Sigmoid colon (tissue), 7 donors: ENCODE measurements at regions of chr15 and their contacts with region 1.

Region 1: DNA sequence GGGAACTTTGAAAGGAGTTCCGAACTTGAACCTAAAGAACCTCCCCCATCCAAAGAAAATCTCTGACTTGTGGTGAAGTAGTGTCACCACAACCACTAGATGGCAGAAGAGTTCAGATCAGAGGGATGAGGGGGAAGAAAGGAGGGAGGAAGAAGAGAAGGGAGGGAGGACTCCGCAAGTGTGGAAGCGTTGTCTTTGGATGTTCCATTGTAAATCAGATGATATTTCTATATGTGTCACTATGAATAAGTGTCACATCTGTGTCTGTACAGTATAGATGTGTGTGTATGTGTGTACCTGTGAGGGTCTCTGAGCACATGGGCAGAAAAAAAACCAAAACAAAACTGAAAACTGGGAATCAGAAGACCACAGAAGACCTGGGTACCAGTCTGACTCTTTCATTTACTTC is 16.9 kb downstream of the SLC24A1 start:
- DNase-seq: no peak
- H3K4me3 ChIP-seq: peak overlapping the region in 2 of 4 donors; percentile 19 to 21
- H3K27ac ChIP-seq: no peak overlapping the region
- H3K4me1 ChIP-seq: peaks cover 0 to 8% (median 5%) of the 10 kb centered on the region in 4 donors
- H3K27me3 ChIP-seq: no peaks in the 10 kb centered on the region
- CTCF ChIP-seq: peak; percentile 54 to 85 (median 78)
- EP300 ChIP-seq: no peak
- POLR2A ChIP-seq: no peak

Region 2: GRCh38 chr15:65259367-65259797 is 379.3 kb before region 1 on chr15:
- intact Hi-C with region 1: no loop called
- DNase-seq: peak; percentile 94
- H3K4me3 ChIP-seq: peak overlapping the region in 1 of 4 donors; percentile 11
- H3K27ac ChIP-seq: peak overlapping the region; percentile 82 to 89 (median 86)
- H3K4me1 ChIP-seq: peaks cover 0 to 84% (median 80%) of the 10 kb centered on the region in 4 donors
- H3K27me3 ChIP-seq: no peaks in the 10 kb centered on the region
- CTCF ChIP-seq: no peak
- EP300 ChIP-seq: peak in 1 of 4 donors; percentile 40
- POLR2A ChIP-seq: no peak

Region 3: GRCh38 chr15:65550681-65551098 is 88.0 kb before region 1 on chr15:
- intact Hi-C with region 1: no loop called
- DNase-seq: no peak
- H3K4me3 ChIP-seq: no peak overlapping the region
- H3K27ac ChIP-seq: no peak overlapping the region
- H3K4me1 ChIP-seq: no peaks in the 10 kb centered on the region
- H3K27me3 ChIP-seq: no peaks in the 10 kb centered on the region
- CTCF ChIP-seq: no peak
- EP300 ChIP-seq: no peak
- POLR2A ChIP-seq: no peak

Region 4: DNA sequence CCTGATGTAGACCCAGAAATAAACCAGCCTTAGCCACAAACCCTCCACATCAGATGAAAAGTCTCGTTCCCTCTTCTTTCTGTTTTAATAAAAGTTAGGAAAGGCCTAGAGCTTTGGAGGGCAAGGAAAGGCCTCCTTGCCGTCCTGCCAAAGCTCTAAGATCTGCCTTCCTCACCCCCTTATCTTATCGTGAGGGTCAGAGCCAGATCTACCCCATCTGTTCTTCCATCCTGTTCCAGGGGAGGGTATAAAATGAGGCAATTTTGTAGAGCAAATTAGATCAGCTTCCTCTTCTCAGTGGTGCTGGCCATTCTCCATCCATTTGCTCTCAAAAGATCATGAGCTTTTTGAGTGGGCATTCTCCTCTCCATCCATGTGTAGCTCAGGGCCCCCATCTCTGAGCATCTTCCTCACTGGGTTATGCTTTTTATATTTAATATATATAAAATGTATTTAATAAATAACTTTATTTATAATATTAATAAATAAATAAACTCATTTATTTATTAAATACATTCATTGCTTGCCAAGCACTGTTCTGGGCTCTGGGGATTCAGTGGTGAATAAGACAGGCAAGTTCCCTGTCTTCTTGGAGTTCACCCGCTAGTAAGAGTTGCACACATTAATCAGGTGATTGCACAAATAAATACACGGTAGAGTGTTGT is 18.9 kb before region 1 on chr15:
- intact Hi-C with region 1: no loop called
- DNase-seq: no peak
- H3K4me3 ChIP-seq: no peak overlapping the region
- H3K27ac ChIP-seq: no peak overlapping the region
- H3K4me1 ChIP-seq: no peaks in the 10 kb centered on the region
- H3K27me3 ChIP-seq: no peaks in the 10 kb centered on the region
- CTCF ChIP-seq: no peak
- EP300 ChIP-seq: no peak
- POLR2A ChIP-seq: no peak

Region 5: DNA sequence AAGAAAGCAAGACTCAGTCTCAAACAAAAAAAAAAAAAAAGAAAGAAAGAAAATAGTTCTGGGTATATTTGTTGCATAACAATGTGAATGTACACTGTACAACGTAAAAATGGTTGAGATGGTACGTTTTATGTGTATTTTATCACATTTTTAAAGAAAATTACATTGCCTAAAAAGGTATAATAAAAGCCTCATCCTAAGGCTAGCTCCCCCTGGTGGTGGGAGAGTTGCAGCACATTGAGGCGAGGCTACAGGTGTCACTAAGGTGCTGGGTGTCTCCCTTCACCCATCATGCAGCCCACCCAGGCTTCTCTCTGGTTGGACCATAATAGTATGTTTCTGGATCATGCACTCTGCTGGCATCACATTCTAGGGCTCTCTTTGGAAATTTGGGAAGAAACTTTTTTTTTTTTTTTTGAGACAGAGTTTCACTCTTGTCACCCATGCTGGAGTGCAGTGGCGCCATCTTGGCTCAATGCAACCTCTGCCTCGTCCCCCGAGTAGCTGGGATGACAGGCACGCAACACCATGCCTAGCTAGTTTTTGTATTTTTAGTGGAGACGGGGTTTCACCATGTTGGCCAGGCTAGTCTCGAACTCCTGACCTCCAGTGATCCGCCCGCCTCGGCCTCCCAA is 218.3 kb after region 1 on chr15:
- intact Hi-C with region 1: loop called (anchors 2 kb)
- DNase-seq: peak; percentile 80
- H3K4me3 ChIP-seq: no peak overlapping the region
- H3K27ac ChIP-seq: no peak overlapping the region
- H3K4me1 ChIP-seq: no peaks in the 10 kb centered on the region
- H3K27me3 ChIP-seq: no peaks in the 10 kb centered on the region
- CTCF ChIP-seq: peak; percentile 43 to 82 (median 68)
- EP300 ChIP-seq: no peak
- POLR2A ChIP-seq: no peak

Region 6: DNA sequence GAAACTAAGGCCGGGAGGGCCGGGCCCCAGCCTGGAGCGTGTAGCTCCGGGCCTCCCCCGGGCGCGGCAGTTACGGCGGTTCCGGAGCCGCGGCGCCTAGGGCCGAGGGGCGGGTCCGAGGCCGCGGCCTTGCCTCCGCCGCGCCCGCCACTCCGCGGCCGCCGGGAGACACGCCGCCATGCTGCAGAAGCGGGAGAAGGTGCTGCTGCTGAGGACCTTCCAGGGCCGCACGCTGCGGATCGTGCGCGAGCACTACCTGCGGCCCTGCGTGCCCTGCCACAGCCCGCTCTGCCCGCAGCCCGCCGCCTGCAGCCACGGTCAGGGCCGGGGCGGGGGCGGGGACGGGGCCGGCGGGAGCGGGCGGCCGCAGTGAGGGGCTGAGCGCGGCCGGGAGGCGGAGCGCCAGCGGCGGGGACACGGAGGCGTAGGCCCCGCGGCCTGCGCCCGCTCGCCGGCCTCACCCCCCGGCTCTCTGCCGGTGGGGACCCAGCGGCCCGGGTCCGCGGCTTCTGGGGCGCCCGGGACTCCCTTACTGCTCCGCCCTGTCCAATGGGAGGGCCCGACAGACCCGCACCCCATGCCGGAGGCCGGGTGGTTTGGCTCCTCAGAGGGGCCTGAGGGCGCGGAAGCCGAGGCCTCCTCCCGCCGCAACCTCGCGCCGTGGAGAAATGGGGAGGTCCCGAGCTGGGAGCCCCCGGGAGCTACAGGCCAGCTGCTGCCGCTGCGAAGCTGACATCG is 654.9 kb after region 1 on chr15 and contains the start of gene DIS3L:
- intact Hi-C with region 1: loop called (anchors 5 kb)
- DNase-seq: peak; percentile 75
- H3K4me3 ChIP-seq: peak within 1 kb of the TSS; percentile 62 to 79 (median 76)
- H3K27ac ChIP-seq: peak within 1 kb of the TSS; percentile 88 to 94 (median 92)
- H3K4me1 ChIP-seq: peaks cover 0 to 42% (median 30%) of the 10 kb centered on the region in 4 donors
- H3K27me3 ChIP-seq: no peaks in the 10 kb centered on the region
- CTCF ChIP-seq: no peak
- EP300 ChIP-seq: no peak
- POLR2A ChIP-seq: no peak
- total RNA-seq, gene DIS3L: 29.5 to 52.3 (median 40.9) TPM